Esophagus muscularis mucosa (tissue), 4 donors: ENCODE measurements at regions of chr1 and their contacts with region 1.

Region 1: GRCh38 chr1:91404151-91405012 is at the start of gene HFM1:
- DNase-seq: no peak
- H3K4me3 ChIP-seq: peak within 1 kb of the TSS; percentile 63 to 77 (median 68)
- H3K27ac ChIP-seq: peak within 1 kb of the TSS; percentile 85 to 89 (median 86)
- H3K4me1 ChIP-seq: peaks cover 0 to 16% (median 9%) of the 10 kb centered on the region in 4 donors
- H3K27me3 ChIP-seq: no peaks in the 10 kb centered on the region
- CTCF ChIP-seq: peak in 2 of 3 experiments; percentile 2 to 8
- EP300 ChIP-seq: no peak
- POLR2A ChIP-seq: no peak
- total RNA-seq, gene HFM1: 0.42 to 2.2 (median 1.5) TPM

Region 2: GRCh38 chr1:90640325-90640724 is 764.1 kb before region 1 on chr1:
- intact Hi-C with region 1: no loop called
- DNase-seq: no peak
- H3K4me3 ChIP-seq: no peak overlapping the region
- H3K27ac ChIP-seq: no peak overlapping the region
- H3K4me1 ChIP-seq: no peaks in the 10 kb centered on the region
- H3K27me3 ChIP-seq: no peaks in the 10 kb centered on the region
- CTCF ChIP-seq: no peak
- EP300 ChIP-seq: no peak
- POLR2A ChIP-seq: no peak

Region 3: DNA sequence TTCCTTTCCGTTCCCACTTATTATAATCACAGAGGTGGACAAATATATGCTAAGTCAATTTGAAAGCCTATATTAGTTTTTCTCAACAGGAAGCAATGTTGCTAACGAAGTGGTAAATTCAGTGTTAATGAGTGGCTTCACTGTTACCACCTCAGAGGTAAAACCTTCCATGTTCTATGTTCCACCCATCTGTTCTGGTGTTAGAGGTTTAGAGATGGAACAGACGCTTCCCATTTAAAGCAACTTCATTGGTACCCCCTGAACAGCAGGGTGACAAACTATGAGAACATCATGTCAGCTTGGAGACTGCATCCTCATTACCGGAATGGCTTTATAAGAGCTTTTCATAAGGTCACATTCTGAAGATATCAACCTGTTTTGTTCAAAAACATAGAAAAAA is 460.4 kb before region 1 on chr1:
- intact Hi-C with region 1: no loop called
- DNase-seq: no peak
- H3K4me3 ChIP-seq: no peak overlapping the region
- H3K27ac ChIP-seq: no peak overlapping the region
- H3K4me1 ChIP-seq: peaks cover 3 to 19% (median 14%) of the 10 kb centered on the region in 4 donors
- H3K27me3 ChIP-seq: no peaks in the 10 kb centered on the region
- CTCF ChIP-seq: no peak
- EP300 ChIP-seq: no peak
- POLR2A ChIP-seq: no peak

Region 4: GRCh38 chr1:91386109-91386508 is 18.3 kb before region 1 on chr1:
- intact Hi-C with region 1: no loop called
- DNase-seq: no peak
- H3K4me3 ChIP-seq: no peak overlapping the region
- H3K27ac ChIP-seq: no peak overlapping the region
- H3K4me1 ChIP-seq: no peaks in the 10 kb centered on the region
- H3K27me3 ChIP-seq: no peaks in the 10 kb centered on the region
- CTCF ChIP-seq: no peak
- EP300 ChIP-seq: no peak
- POLR2A ChIP-seq: no peak

Region 5: GRCh38 chr1:91500756-91501522 is 96.6 kb after region 1 on chr1 and contains the start of gene CDC7:
- intact Hi-C with region 1: loop called (anchors 5 kb)
- DNase-seq: peak; percentile 96
- H3K4me3 ChIP-seq: peak within 1 kb of the TSS; percentile 66 to 91 (median 72)
- H3K27ac ChIP-seq: peak within 1 kb of the TSS; percentile 76 to 93 (median 89)
- H3K4me1 ChIP-seq: peaks cover 17 to 19% (median 17%) of the 10 kb centered on the region in 4 donors
- H3K27me3 ChIP-seq: no peaks in the 10 kb centered on the region
- CTCF ChIP-seq: peak; percentile 3 to 30 (median 29)
- EP300 ChIP-seq: peak; percentile 52
- POLR2A ChIP-seq: peak; percentile 10
- total RNA-seq, gene CDC7: 0.71 to 2.8 (median 1.1) TPM